Heart left ventricle (tissue), 16 donors: ENCODE measurements at regions of chr6 and their contacts with region 1.

Region 1: GRCh38 chr6:109073344-109074132 is 21.1 kb downstream of the SESN1 start:
- DNase-seq: peak in 2 of 5 donors; percentile 42 to 46
- ATAC-seq: peak; percentile 43 to 64 (median 58)
- H3K4me3 ChIP-seq: no peak overlapping the region
- H3K27ac ChIP-seq: peak overlapping the region in 6 of 12 donors; percentile 2 to 34 (median 22)
- H3K4me1 ChIP-seq: peaks cover 0 to 63% (median 26%) of the 10 kb centered on the region in 12 donors
- H3K27me3 ChIP-seq: no peaks in the 10 kb centered on the region
- CTCF ChIP-seq: peak; percentile 48 to 79 (median 66)
- POLR2A ChIP-seq: no peak

Region 2: GRCh38 chr6:108782179-108783041 is 291.1 kb before region 1 on chr6:
- intact Hi-C with region 1: loop called in 4 of 10 experiments (anchors 5 to 10 kb)
- DNase-seq: peak; percentile 81 to 88 (median 83)
- ATAC-seq: peak; percentile 85 to 96 (median 94)
- H3K4me3 ChIP-seq: peak overlapping the region in 11 of 12 donors; percentile 4 to 66 (median 54)
- H3K27ac ChIP-seq: peak overlapping the region in 4 of 12 donors; percentile 25 to 68 (median 55)
- H3K4me1 ChIP-seq: peaks cover 0 to 15% (median 6%) of the 10 kb centered on the region in 12 donors
- H3K27me3 ChIP-seq: no peaks in the 10 kb centered on the region
- CTCF ChIP-seq: peak; percentile 65 to 88 (median 78)
- POLR2A ChIP-seq: no peak

Region 3: DNA sequence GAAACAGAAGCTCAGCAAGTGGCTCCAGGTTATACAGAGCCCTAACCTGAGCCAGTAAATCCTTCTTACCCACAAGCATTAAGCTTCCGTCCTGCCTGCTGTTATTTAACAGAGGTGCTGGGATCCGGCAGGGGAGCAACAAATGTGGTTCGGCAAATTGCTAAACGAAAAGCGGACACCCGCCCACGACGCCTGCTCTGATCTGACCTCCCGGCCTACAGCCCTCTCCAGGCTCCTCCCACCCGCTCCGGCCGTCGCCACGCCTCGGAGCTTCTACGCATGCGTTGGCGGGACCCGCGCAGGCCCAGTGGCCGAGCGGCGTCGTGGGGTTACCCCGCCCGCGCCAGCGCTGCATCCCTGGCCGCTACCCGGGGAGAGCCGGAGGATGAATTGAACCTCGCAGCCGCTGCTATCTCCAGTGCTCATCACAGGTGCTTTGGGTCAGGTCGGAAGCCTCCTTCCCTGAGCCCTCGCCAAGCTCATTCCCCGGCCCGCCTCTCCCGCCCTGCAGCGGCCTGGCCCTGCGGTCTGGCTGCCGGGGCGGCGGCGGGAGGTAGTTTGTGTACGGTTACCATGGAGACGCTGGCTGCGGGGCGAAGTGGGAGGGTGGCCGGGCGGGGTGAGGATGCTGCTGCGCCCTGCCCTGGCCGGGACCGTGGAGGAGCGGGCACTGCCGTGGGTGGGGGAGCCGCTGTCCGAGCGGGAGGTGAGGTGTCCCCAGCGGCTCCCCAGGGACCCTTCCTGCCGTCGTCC is 225.2 kb before region 1 on chr6 and contains the start of gene ARMC2:
- intact Hi-C with region 1: loop called in 6 of 10 experiments (anchors 5 to 10 kb)
- DNase-seq: peak; percentile 94 to 99 (median 96)
- ATAC-seq: peak; percentile 95 to 98 (median 96)
- H3K4me3 ChIP-seq: peak within 1 kb of the TSS; percentile 59 to 92 (median 76)
- H3K27ac ChIP-seq: peak within 1 kb of the TSS; percentile 66 to 94 (median 88)
- H3K4me1 ChIP-seq: peaks cover 0 to 58% (median 29%) of the 10 kb centered on the region in 12 donors
- H3K27me3 ChIP-seq: no peaks in the 10 kb centered on the region
- CTCF ChIP-seq: peak in 2 of 12 donors; percentile 10 to 14
- POLR2A ChIP-seq: peak; percentile 66
- total RNA-seq, gene ARMC2: 5.7 to 18.0 (median 10.2) TPM

Region 4: DNA sequence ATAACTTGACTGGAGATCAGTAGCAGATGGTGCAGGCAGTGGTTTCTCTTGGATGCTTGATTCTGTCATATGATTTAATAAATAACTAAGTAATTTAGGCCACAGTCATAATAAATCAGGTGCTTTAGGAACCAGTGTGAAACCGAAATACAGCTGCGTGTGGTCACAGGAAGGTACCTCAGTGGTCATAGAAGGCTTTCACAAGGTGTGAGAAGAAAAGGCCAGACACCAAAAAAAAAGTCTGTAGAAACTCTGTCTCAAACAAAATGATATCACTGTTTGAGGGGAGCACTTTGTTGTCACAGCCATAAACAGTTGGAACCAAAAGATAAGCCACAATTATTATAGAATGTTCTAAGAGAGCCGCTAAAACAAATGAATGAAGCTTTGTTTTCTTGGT is 168.8 kb before region 1 on chr6:
- intact Hi-C with region 1: loop called in 3 of 10 experiments (anchors 5 kb)
- DNase-seq: no peak
- ATAC-seq: no peak
- H3K4me3 ChIP-seq: no peak overlapping the region
- H3K27ac ChIP-seq: peak overlapping the region in 2 of 12 donors; percentile 2 to 4
- H3K4me1 ChIP-seq: peaks cover 0 to 54% (median 7%) of the 10 kb centered on the region in 12 donors
- H3K27me3 ChIP-seq: no peaks in the 10 kb centered on the region
- CTCF ChIP-seq: no peak
- POLR2A ChIP-seq: no peak

Region 5: GRCh38 chr6:109002051-109002697 is 71.4 kb before region 1 on chr6:
- intact Hi-C with region 1: loop called in 4 of 10 experiments (anchors 5 to 10 kb)
- DNase-seq: no peak
- ATAC-seq: peak; percentile 50 to 69 (median 60)
- H3K4me3 ChIP-seq: peak overlapping the region in 3 of 12 donors; percentile 6 to 14 (median 8)
- H3K27ac ChIP-seq: peak overlapping the region; percentile 34 to 89 (median 69)
- H3K4me1 ChIP-seq: peaks cover 5 to 89% (median 53%) of the 10 kb centered on the region in 12 donors
- H3K27me3 ChIP-seq: no peaks in the 10 kb centered on the region
- CTCF ChIP-seq: no peak
- POLR2A ChIP-seq: peak in 1 of 2 donors; percentile 7